Activated T-helper 1 cell treated with anti-CD3 and anti-CD28 coated beads, Interleukin-12 subunit alpha, Interleukin-12 subunit beta, Interleukin-2, Interleukin-4 antibody, amounts not matched to agents 30 ng/mL and 10 ng/mL and 1 ng/mL, durations not matched to agents 14 hours and 24 hours and 36 hours (primary cell): ENCODE measurements at regions of chr4 and their contacts with region 1.

Region 1: GRCh38 chr4:40316782-40317635 is 18.1 kb upstream of the CHRNA9 start:
- DNase-seq: peak; percentile 59
- H3K4me3 Mint-ChIP-seq: peak overlapping the region; percentile 83
- H3K27ac Mint-ChIP-seq: peak overlapping the region; percentile 99
- H3K4me1 Mint-ChIP-seq: peaks cover 58% of the 10 kb centered on the region
- H3K27me3 Mint-ChIP-seq: no peaks in the 10 kb centered on the region

Region 2: DNA sequence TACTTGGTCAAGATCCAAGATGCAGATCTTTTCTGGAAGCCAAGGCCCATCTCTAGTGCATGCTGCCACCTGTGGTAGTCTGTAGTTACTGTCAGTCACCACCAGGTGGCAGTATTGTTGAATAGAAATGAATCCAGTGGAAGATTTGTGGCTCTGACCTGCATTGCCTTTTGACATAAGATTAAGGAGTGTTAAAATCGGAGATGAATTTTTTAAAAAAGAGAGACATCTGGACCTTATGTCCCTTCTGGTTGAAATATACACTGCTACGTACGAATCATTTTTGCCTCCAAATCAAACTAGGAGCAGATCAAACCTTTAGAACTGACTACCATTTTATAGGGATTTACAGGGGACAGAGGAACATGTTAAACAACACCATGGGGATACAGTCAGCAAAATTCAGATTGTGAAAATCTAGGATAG is 167.0 kb before region 1 on chr4:
- intact Hi-C with region 1: loop called (anchors 2 kb)
- DNase-seq: peak; percentile 67
- H3K4me3 Mint-ChIP-seq: no peak overlapping the region
- H3K27ac Mint-ChIP-seq: peak overlapping the region; percentile 48
- H3K4me1 Mint-ChIP-seq: no peaks in the 10 kb centered on the region
- H3K27me3 Mint-ChIP-seq: no peaks in the 10 kb centered on the region

Region 3: DNA sequence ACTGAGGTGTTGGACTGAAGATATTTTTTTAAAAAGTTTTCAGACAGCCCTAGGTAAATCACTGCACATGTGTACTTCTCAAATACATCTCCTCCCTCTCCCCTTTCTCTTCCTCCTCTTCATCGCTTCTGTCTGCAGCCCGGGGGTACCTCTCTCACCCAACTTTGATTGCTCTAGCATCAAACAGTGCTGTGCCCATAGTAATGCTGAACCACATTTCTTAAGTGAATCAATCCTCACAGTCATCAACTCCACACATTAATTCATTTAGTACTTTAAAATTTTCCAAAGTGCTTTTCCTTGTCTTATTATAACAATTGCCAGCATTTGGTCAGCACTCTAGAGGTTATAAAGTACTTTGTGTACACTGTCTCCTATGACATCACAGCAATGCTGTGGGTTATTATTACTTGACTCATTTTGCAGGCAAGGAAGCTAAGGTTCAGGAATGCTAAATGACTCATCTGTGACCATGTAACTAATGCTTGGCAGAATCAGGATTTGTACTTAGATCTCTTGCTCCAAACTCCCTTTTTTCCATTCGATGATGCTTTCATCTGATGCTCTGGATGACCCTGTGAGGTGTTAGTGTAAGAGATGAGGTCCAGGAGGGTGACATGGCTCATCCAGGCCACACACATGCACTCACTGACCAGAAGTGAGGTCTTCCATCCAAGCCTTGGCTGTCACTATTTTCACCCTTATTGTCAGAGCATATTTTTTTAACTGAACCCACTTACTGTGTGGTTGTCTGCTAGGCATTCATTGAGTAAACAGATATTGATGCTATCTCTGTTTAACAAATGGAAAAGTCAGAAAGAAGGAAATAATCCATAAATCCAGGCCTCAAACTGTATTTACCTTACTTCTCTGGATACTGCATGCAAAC is 61.4 kb before region 1 on chr4:
- intact Hi-C with region 1: loop called (anchors 1 kb)
- DNase-seq: no peak
- H3K4me3 Mint-ChIP-seq: peak overlapping the region; percentile 42
- H3K27ac Mint-ChIP-seq: peak overlapping the region; percentile 93
- H3K4me1 Mint-ChIP-seq: peaks cover 67% of the 10 kb centered on the region
- H3K27me3 Mint-ChIP-seq: no peaks in the 10 kb centered on the region

Region 4: DNA sequence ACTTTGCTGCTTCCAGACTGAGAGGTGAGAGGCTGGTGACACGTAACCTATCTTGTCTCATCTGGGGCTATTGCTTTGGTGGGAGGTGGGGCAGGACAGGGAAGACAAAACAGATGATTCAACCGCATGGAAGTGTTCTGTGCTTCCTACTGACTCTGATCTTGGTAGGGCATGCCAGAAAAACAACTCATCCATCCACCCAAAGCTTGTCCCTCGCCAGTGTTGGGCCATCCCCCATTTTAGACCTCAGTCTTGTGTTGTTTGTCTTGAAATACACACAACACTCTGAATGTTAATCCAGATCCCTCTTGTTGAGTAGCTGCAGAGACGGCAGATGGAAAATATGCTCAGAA is 18.5 kb after region 1 on chr4:
- intact Hi-C with region 1: no loop called
- DNase-seq: no peak
- H3K4me3 Mint-ChIP-seq: no peak overlapping the region
- H3K27ac Mint-ChIP-seq: no peak overlapping the region
- H3K4me1 Mint-ChIP-seq: peaks cover 7% of the 10 kb centered on the region
- H3K27me3 Mint-ChIP-seq: no peaks in the 10 kb centered on the region

Region 5: GRCh38 chr4:40550948-40551462 is 234.0 kb after region 1 on chr4:
- intact Hi-C with region 1: loop called (anchors 1 kb)
- DNase-seq: peak; percentile 37
- H3K4me3 Mint-ChIP-seq: peak overlapping the region; percentile 84
- H3K27ac Mint-ChIP-seq: peak overlapping the region; percentile 81
- H3K4me1 Mint-ChIP-seq: peaks cover 65% of the 10 kb centered on the region
- H3K27me3 Mint-ChIP-seq: no peaks in the 10 kb centered on the region